Caco-2 (cell line): ENCODE measurements at regions of chr2 and their contacts with region 1.

Region 1: DNA sequence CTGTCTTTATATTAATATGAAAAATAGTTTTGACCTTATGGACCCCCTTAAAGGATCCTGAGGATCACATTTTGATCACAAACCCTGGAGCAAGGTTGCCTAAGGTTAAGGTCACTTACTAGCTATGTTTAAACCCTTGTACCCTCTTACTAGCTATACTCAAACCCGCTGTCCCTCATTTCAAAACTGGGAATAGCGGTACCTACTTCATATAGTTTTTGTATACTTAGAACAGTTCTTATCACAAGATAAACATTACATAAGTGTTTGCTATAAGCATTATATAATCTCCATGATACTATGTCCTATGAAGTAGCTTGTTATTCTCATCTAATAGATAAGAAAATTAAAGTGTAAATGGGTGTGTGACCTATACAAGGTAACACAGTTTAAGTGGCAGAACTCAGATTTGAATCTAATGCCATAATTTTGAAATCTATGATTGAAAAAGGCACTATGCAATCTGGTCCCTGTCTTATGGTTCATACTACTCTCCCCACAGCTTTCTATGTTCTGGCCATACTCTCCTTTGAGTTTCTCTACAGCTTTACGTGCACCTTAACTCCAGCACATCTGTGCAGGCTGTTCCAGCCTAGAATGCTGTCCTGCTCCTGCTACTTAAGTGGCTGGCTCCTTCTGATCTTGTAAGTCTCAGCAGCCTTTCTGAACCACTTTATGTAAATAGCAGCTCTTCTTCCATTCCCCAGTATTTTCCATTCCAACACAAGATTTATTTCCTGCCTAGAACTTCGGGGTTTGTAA is 30.4 kb downstream of the HYCC2 start:
- DNase-seq: no peak
- H3K4me3 ChIP-seq: no peak overlapping the region
- H3K4me3 Mint-ChIP-seq: no peak overlapping the region
- H3K27ac Mint-ChIP-seq: no peak overlapping the region
- H3K4me1 ChIP-seq: peaks cover 9% of the 10 kb centered on the region; the same call in 1 of the 2 replicates
- H3K4me1 Mint-ChIP-seq: peaks cover 8% of the 10 kb centered on the region
- H3K27me3 ChIP-seq: no peaks in the 10 kb centered on the region
- H3K27me3 Mint-ChIP-seq: no peaks in the 10 kb centered on the region
- CTCF ChIP-seq: no peak

Region 2: DNA sequence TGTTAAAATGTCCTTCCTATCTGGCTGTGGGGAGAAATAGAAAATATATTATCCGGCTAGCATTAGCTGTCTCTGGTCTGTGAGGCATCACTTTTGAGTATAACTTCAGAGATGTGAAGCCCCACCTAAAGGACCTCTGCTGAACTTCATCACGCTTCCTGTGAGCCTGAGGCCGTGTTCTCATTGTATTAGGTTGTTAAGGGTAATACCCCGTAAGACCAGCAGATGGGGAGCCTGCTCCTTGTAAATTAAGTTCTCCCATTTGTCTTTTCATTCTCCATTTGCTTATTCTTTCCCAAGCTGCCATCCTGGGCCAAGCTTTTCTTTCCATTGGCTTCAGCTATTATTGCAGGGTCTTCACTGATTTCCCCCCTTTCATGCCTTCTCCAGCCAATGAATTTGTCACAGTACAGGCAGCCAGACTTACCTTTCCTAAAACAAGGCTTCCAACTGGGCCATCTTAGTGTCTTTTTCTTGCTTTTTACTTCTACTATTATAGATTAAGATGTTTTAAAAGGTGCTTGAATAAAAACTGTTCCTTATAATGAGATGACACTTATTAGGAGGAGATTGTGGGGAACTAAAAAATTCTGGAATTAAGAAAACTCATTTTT is 139.5 kb before region 1 on chr2:
- CTCF ChIA-PET with region 1: no interaction called
- POLR2A ChIA-PET with region 1: no interaction called
- intact Hi-C with region 1: no loop called
- DNase-seq: peak; percentile 84 to 86
- H3K4me3 ChIP-seq: no peak overlapping the region
- H3K4me3 Mint-ChIP-seq: no peak overlapping the region
- H3K27ac Mint-ChIP-seq: no peak overlapping the region
- H3K4me1 ChIP-seq: no peaks in the 10 kb centered on the region
- H3K4me1 Mint-ChIP-seq: peaks cover 6% of the 10 kb centered on the region
- H3K27me3 ChIP-seq: no peaks in the 10 kb centered on the region
- H3K27me3 Mint-ChIP-seq: no peaks in the 10 kb centered on the region
- CTCF ChIP-seq: peak; percentile 85 to 90

Region 3: DNA sequence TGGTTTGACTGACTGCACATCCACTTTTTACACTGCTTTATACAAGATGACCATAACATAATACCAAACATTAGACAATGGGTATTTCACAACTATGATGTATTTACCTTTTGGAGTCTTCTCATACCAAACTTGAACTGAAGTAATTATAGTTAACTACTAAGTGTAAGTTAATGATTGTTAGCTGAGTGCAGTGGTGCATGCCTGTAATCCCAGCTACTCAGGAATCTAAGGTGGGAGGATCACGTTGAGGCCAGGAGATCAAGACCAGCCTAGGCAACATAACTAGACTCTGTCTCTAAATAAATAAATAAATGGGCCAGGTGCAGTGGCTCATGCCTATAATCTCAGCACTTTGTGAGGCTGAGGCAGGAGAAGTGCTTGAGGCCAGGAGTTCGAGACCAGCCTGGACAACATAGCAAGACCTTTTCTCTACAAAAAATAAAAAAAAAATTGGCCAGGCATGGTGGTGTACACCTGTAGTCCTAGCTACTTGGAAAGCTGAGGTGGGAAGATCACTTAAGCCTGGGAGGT is 32.7 kb before region 1 on chr2:
- CTCF ChIA-PET with region 1: no interaction called
- POLR2A ChIA-PET with region 1: no interaction called
- intact Hi-C with region 1: loop called (anchors 5 kb)
- DNase-seq: peak; percentile 78 to 87
- H3K4me3 ChIP-seq: no peak overlapping the region
- H3K4me3 Mint-ChIP-seq: peak overlapping the region; percentile 31
- H3K27ac Mint-ChIP-seq: peak overlapping the region; percentile 75
- H3K4me1 ChIP-seq: peaks cover 28% of the 10 kb centered on the region
- H3K4me1 Mint-ChIP-seq: peaks cover 19% of the 10 kb centered on the region
- H3K27me3 ChIP-seq: no peaks in the 10 kb centered on the region
- H3K27me3 Mint-ChIP-seq: no peaks in the 10 kb centered on the region
- CTCF ChIP-seq: no peak

Region 4: GRCh38 chr2:202494300-202495229 is 1453.5 kb after region 1 on chr2:
- CTCF ChIA-PET with region 1: no interaction called
- POLR2A ChIA-PET with region 1: no interaction called
- intact Hi-C with region 1: no loop called
- DNase-seq: peak in 1 of 2 experiments; percentile 21
- H3K4me3 ChIP-seq: no peak overlapping the region
- H3K4me3 Mint-ChIP-seq: no peak overlapping the region
- H3K27ac Mint-ChIP-seq: no peak overlapping the region
- H3K4me1 ChIP-seq: no peaks in the 10 kb centered on the region; the same call in 1 of the 2 replicates
- H3K4me1 Mint-ChIP-seq: no peaks in the 10 kb centered on the region
- H3K27me3 ChIP-seq: no peaks in the 10 kb centered on the region
- H3K27me3 Mint-ChIP-seq: no peaks in the 10 kb centered on the region
- CTCF ChIP-seq: no peak